BJ (cell line): ENCODE measurements at regions of chr3 and their contacts with region 1.

Region 1: GRCh38 chr3:111080413-111080812 is 8.8 kb downstream of the NECTIN3 start:
- DNase-seq: no peak
- H3K4me3 ChIP-seq: no peak overlapping the region
- H3K27me3 ChIP-seq: no peaks in the 10 kb centered on the region
- CTCF ChIP-seq: peak; percentile 46

Region 2: DNA sequence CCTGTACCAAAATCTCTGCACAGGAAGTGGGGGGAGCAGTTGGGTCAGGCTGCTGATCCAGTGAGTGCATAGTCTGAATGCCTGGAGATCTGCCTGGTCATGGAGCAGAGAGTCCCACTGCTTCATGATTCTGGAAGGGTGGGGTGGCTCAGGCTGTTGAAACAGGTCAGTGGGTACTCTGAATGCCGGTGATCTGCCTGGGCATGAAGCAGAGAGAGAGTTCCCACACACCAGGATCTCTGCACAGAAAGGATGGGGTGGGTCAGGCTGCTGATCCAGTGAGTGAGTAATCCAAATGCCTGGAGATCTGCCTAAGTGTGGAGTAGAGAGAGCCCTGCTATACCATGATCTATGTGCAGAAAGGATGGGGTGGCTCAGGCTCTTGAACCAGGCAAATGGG is 1068.7 kb after region 1 on chr3:
- CTCF ChIA-PET with region 1: no interaction called
- POLR2A ChIA-PET with region 1: interaction called, 11 read pairs
- DNase-seq: no peak
- H3K4me3 ChIP-seq: no peak overlapping the region
- H3K27me3 ChIP-seq: no peaks in the 10 kb centered on the region
- CTCF ChIP-seq: no peak